Activated CD4-positive, alpha-beta memory T cell treated with anti-CD3 and anti-CD28 coated beads for 36 hours (primary cell): ENCODE measurements at regions of chr12 and their contacts with region 1.

Region 1: DNA sequence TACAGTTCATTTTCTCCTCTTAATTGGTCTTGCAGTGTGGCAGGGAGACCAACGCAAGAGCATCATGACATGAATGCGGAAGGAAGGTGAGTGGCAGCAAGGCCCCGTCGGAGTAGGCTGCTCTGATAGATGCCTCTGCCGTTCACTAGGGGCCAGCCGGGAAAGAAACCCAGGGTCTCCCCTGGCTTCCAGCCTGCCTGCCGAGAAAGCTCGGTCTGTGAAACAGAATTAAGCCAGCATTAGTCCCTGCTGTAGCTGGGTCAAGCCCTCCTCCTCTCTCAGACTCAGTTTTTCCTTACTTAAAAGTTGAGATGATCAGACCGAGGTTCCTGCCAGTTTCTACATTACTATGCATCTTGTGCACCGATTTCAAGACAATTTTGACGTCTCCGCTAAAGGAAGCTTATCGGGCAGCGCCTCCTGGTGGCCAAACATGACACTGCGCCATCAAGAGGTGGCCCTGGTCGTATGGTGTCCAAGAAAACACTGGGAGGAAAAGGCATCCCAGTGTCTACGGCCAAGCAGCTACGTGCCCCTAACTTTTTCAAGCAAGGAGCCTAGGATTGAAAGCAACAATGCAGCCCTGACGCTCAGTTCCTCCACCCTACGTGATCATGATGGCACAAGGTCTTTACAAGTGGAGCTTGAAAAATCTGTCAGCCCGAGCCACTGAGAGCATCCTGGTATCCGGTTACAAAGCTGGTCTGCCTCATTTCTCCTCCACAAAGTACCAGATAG is 131.6 kb downstream of the KSR2 start:
- DNase-seq: peak; percentile 86
- H3K4me3 Mint-ChIP-seq: no peak overlapping the region
- H3K27ac Mint-ChIP-seq: peak overlapping the region; percentile 42
- H3K4me1 Mint-ChIP-seq: peaks cover 8% of the 10 kb centered on the region
- H3K27me3 Mint-ChIP-seq: peaks cover 8% of the 10 kb centered on the region

Region 2: DNA sequence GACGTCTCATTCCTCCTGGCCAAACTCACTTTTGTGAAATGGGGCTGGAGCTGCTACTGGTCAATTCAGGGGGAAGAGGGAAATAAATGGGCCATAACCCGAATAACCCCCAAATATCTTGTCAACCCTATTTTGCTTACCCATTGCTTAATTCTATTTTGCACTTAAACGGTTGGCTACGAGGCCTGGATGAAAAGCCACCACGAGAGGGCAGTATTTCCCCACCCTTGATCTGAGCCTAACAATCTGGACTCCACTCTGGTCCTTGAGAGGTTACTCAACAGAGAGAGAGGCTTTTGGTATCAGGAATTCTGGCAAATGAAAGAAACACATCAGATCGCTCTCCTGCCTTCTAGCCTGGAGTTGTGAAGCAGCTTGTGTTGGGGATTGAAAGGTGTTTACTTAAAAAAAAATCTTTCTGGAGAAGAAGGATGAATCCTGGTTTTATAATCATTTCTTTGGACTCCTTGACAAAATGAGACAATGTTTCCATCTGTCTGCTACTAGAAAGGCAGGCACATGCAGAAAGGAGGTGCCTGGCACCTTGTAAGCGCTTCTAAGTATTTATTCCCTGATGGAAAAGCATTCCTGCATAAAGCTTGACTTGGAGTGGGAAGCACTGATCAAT is 624.5 kb before region 1 on chr12:
- CTCF ChIA-PET with region 1: interaction called, 32 read pairs
- POLR2A ChIA-PET with region 1: no interaction called
- intact Hi-C with region 1: loop called (anchors 1 kb)
- DNase-seq: peak; percentile 75
- H3K4me3 Mint-ChIP-seq: no peak overlapping the region
- H3K27ac Mint-ChIP-seq: no peak overlapping the region
- H3K4me1 Mint-ChIP-seq: no peaks in the 10 kb centered on the region
- H3K27me3 Mint-ChIP-seq: peaks cover 7% of the 10 kb centered on the region

Region 3: GRCh38 chr12:117367011-117367638 is 470.0 kb before region 1 on chr12:
- CTCF ChIA-PET with region 1: interaction called, 62 read pairs
- POLR2A ChIA-PET with region 1: no interaction called
- intact Hi-C with region 1: loop called (anchors 1 kb)
- DNase-seq: peak; percentile 66
- H3K4me3 Mint-ChIP-seq: no peak overlapping the region
- H3K27ac Mint-ChIP-seq: no peak overlapping the region
- H3K4me1 Mint-ChIP-seq: no peaks in the 10 kb centered on the region
- H3K27me3 Mint-ChIP-seq: peaks cover 12% of the 10 kb centered on the region

Region 4: DNA sequence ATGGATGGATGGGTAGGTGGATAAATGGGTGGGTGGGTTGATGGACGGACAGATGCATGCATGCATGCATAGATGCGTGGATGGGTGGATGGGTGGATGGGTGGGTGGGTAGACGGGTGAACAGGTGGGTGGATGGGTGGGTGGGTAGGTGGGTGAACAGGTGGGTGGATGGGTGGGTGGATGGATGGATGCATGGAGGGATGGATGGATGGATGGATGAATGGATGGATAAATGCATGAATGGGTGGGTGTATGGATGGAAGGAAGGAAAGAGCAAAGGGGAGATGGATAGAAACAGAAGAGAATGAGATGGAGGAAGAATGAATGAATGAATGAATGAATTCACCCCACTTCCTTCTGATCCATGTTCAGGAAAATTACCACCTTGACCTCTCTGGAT is 11.3 kb before region 1 on chr12:
- CTCF ChIA-PET with region 1: interaction called, 12 read pairs
- POLR2A ChIA-PET with region 1: no interaction called
- intact Hi-C with region 1: no loop called
- DNase-seq: no peak
- H3K4me3 Mint-ChIP-seq: no peak overlapping the region
- H3K27ac Mint-ChIP-seq: no peak overlapping the region
- H3K4me1 Mint-ChIP-seq: no peaks in the 10 kb centered on the region
- H3K27me3 Mint-ChIP-seq: peaks cover 2% of the 10 kb centered on the region

Region 5: GRCh38 chr12:117857632-117858612 is 20.8 kb after region 1 on chr12:
- CTCF ChIA-PET with region 1: interaction called, 23 read pairs
- POLR2A ChIA-PET with region 1: no interaction called
- intact Hi-C with region 1: no loop called
- DNase-seq: peak; percentile 73
- H3K4me3 Mint-ChIP-seq: no peak overlapping the region
- H3K27ac Mint-ChIP-seq: no peak overlapping the region
- H3K4me1 Mint-ChIP-seq: no peaks in the 10 kb centered on the region
- H3K27me3 Mint-ChIP-seq: peaks cover 4% of the 10 kb centered on the region

Region 6: DNA sequence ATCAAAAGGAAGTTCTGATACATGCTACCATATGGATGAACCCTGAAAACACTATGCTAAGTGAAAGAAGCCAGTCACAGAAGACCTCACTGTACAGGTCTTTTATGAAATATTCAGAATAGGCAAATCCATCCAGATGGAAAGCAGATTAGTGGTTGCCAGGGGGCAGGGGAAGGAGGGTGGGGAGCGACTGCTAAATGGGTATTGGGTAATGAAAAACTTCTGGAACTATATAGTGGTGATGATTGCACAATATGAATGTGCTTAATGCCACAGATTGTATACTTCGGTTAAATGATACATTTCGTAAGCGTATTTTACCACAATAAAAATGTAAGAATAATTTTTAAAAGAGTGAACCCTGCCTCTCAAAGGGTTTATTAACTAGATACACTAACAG is 143.4 kb after region 1 on chr12:
- CTCF ChIA-PET with region 1: no interaction called
- POLR2A ChIA-PET with region 1: no interaction called
- intact Hi-C with region 1: no loop called
- DNase-seq: no peak
- H3K4me3 Mint-ChIP-seq: no peak overlapping the region
- H3K27ac Mint-ChIP-seq: no peak overlapping the region
- H3K4me1 Mint-ChIP-seq: peaks cover 2% of the 10 kb centered on the region
- H3K27me3 Mint-ChIP-seq: peaks cover 15% of the 10 kb centered on the region